ENCODE measurements at regions of chr2 and their contacts with region 1.

Region 1: DNA sequence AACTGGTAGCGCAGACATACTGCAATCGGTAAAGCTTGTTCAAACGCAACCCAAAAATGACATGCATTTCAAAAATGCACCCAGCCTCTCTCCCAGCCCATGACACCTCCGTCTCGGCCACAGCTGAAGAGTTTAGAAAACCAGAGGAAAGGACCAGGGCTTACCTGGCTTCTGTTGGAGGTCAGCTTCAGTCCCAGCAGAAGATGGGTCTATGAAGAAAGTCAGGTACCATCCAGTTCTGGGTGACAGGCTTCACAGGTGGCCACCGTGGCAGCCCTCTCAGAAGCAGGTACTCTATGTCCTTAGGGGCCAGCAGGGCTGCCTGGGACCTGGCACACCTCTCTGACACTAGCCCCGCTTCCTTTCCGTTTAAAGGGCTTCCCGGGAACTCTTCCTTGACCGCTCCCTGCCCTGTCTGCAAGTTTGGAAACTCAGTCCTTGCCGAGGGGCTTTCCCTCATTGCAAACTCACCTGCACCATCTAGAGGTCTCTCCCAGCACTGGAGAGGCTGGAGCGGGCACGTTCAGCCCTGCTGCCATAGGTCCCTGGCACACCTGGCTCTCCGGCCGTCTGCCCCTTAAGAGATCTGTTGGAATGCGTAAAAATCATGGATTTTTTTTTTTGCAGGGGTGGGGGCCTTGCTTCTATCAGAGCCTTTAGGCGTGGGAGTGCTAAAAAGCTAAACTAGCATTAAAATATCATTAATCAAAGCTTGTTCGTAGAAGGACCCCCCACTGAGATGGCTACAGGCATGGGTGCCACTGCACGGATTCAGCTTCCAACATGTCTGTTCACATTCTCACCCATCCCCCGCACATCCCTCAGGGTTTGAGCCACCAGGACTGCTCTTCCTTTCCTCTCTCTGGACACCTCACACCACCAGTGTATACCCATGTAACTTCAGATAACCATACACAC is at the start of gene EDAR:
- DNase-seq: peak; percentile 24 to 72 (median 61)
- ATAC-seq: peak; percentile 85
- H3K4me3 ChIP-seq: peak within 1 kb of the TSS; percentile 80
- H3K4me3 Mint-ChIP-seq: peak within 1 kb of the TSS; percentile 77 to 99 (median 96)
- H3K27ac ChIP-seq: peak within 1 kb of the TSS; percentile 74
- H3K27ac Mint-ChIP-seq: peak within 1 kb of the TSS in 8 of 9 donors; percentile 83 to 98 (median 96)
- H3K4me1 ChIP-seq: peaks cover 2 to 35% of the 10 kb centered on the region in 2 donors
- H3K4me1 Mint-ChIP-seq: peaks cover 21 to 74% (median 69%) of the 10 kb centered on the region in 7 donors
- H3K27me3 ChIP-seq: no peaks in the 10 kb centered on the region
- H3K27me3 Mint-ChIP-seq: peaks cover 0 to 37% (median 0%) of the 10 kb centered on the region in 5 donors
- total RNA-seq, gene EDAR: 0.17 to 26.8 (median 21.6) TPM

Region 2: GRCh38 chr2:108607706-108608301 is 381.3 kb before region 1 on chr2:
- CTCF ChIA-PET with region 1: no interaction called
- POLR2A ChIA-PET with region 1: no interaction called
- intact Hi-C with region 1: loop called in 1 of 2 experiments (anchors 5 kb)
- DNase-seq: peak in 7 of 9 donors; percentile 30 to 61 (median 53)
- ATAC-seq: peak; percentile 45
- H3K4me3 ChIP-seq: no peak overlapping the region
- H3K4me3 Mint-ChIP-seq: no peak overlapping the region
- H3K27ac ChIP-seq: no peak overlapping the region
- H3K27ac Mint-ChIP-seq: no peak overlapping the region
- H3K4me1 ChIP-seq: peaks cover 4 to 14% of the 10 kb centered on the region in 2 donors
- H3K4me1 Mint-ChIP-seq: peaks cover 20 to 68% (median 26%) of the 10 kb centered on the region in 7 donors
- H3K27me3 ChIP-seq: no peaks in the 10 kb centered on the region
- H3K27me3 Mint-ChIP-seq: no peaks in the 10 kb centered on the region

Region 3: DNA sequence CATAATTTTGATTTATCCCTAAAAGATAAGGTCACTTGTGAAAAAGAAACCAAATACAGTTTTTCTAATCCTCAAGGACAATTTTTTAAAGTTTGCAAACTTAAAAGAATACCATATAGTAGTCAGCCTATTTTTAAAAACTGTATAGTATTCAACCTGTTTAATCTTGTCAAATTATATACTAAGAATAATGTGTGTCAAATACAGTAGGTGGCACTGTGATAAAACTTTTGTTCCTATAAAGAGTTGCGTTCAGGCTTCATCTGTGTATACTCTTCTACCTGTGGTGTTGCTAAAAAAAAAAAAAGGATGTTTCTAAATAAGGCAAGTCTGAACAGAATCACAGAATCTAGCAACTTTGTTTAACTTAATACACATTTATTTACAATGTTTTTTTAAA is 133.9 kb before region 1 on chr2:
- CTCF ChIA-PET with region 1: interaction called, 7 read pairs
- POLR2A ChIA-PET with region 1: no interaction called
- intact Hi-C with region 1: loop called (anchors 1 to 2 kb)
- DNase-seq: peak in 6 of 9 donors; percentile 27 to 66 (median 54)
- ATAC-seq: peak; percentile 85
- H3K4me3 ChIP-seq: no peak overlapping the region
- H3K4me3 Mint-ChIP-seq: no peak overlapping the region
- H3K27ac ChIP-seq: no peak overlapping the region
- H3K27ac Mint-ChIP-seq: no peak overlapping the region
- H3K4me1 ChIP-seq: no peaks in the 10 kb centered on the region
- H3K4me1 Mint-ChIP-seq: peaks cover 0 to 8% (median 4%) of the 10 kb centered on the region in 7 donors
- H3K27me3 ChIP-seq: no peaks in the 10 kb centered on the region
- H3K27me3 Mint-ChIP-seq: no peaks in the 10 kb centered on the region

Region 4: GRCh38 chr2:108960006-108960405 is 29.0 kb before region 1 on chr2:
- CTCF ChIA-PET with region 1: interaction called, 8 read pairs
- POLR2A ChIA-PET with region 1: interaction called, 19 read pairs
- intact Hi-C with region 1: loop called in 1 of 2 experiments (anchors 1 kb)
- DNase-seq: no peak
- ATAC-seq: no peak
- H3K4me3 ChIP-seq: no peak overlapping the region
- H3K4me3 Mint-ChIP-seq: peak overlapping the region in 8 of 10 donors; percentile 13 to 89 (median 59)
- H3K27ac ChIP-seq: no peak overlapping the region
- H3K27ac Mint-ChIP-seq: peak overlapping the region in 8 of 9 donors; percentile 78 to 98 (median 94)
- H3K4me1 ChIP-seq: peaks cover 10 to 76% of the 10 kb centered on the region in 2 donors
- H3K4me1 Mint-ChIP-seq: peaks cover 10 to 90% (median 85%) of the 10 kb centered on the region in 7 donors
- H3K27me3 ChIP-seq: no peaks in the 10 kb centered on the region
- H3K27me3 Mint-ChIP-seq: no peaks in the 10 kb centered on the region

Region 5: GRCh38 chr2:109020217-109020637 is 31.2 kb after region 1 on chr2:
- CTCF ChIA-PET with region 1: interaction called, 13 read pairs
- POLR2A ChIA-PET with region 1: no interaction called
- intact Hi-C with region 1: no loop called
- DNase-seq: peak in 6 of 9 donors; percentile 28 to 66 (median 46)
- ATAC-seq: peak; percentile 71
- H3K4me3 ChIP-seq: no peak overlapping the region
- H3K4me3 Mint-ChIP-seq: peak overlapping the region in 8 of 10 donors; percentile 7 to 63 (median 23)
- H3K27ac ChIP-seq: no peak overlapping the region
- H3K27ac Mint-ChIP-seq: peak overlapping the region in 8 of 9 donors; percentile 7 to 86 (median 44)
- H3K4me1 ChIP-seq: peaks cover 0 to 14% of the 10 kb centered on the region in 2 donors
- H3K4me1 Mint-ChIP-seq: peaks cover 12 to 54% (median 40%) of the 10 kb centered on the region in 7 donors
- H3K27me3 ChIP-seq: no peaks in the 10 kb centered on the region
- H3K27me3 Mint-ChIP-seq: peaks cover 0 to 9% (median 0%) of the 10 kb centered on the region in 5 donors

Region 6: DNA sequence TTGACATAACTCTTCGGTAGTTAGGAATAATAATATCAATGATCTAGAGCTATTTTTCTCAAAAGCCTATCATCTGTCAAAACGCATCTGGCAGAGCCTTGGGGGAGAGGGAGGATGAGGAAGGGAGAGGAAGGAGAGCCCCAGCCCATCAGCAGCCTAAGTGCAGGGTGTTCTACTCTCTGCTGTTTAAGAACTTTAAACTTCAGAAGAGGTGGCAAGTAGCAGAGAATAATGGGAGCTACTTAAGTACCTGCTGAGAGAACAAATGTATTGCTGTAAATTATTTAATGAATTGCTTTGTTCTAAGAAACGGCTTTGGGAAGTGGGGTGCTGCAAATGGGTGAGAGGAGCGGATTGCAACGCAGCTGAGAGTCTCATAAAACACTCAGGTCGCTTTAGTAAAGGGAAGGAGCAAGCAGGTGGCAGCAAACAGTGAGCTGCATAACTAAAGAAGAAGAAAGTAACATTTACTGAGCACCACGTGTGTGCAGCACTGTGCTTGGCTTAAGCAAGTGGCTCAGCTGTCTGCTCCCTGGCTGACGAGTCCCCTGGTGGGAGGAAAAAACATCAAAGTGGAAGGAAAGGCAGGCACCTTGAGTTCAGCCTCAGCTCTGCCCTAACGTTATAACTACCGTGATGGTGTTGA is 113.7 kb after region 1 on chr2:
- CTCF ChIA-PET with region 1: interaction called, 3 read pairs
- POLR2A ChIA-PET with region 1: no interaction called
- intact Hi-C with region 1: loop called in 1 of 2 experiments (anchors 2 kb)
- DNase-seq: peak in 7 of 9 donors; percentile 17 to 45 (median 33)
- ATAC-seq: peak; percentile 57
- H3K4me3 ChIP-seq: no peak overlapping the region
- H3K4me3 Mint-ChIP-seq: peak overlapping the region in 8 of 10 donors; percentile 33 to 74 (median 64)
- H3K27ac ChIP-seq: no peak overlapping the region
- H3K27ac Mint-ChIP-seq: peak overlapping the region in 8 of 9 donors; percentile 21 to 87 (median 66)
- H3K4me1 ChIP-seq: peaks cover 0 to 13% of the 10 kb centered on the region in 2 donors
- H3K4me1 Mint-ChIP-seq: peaks cover 4 to 41% (median 36%) of the 10 kb centered on the region in 7 donors
- H3K27me3 ChIP-seq: no peaks in the 10 kb centered on the region
- H3K27me3 Mint-ChIP-seq: peaks cover 0 to 18% (median 0%) of the 10 kb centered on the region in 5 donors

Region 7: DNA sequence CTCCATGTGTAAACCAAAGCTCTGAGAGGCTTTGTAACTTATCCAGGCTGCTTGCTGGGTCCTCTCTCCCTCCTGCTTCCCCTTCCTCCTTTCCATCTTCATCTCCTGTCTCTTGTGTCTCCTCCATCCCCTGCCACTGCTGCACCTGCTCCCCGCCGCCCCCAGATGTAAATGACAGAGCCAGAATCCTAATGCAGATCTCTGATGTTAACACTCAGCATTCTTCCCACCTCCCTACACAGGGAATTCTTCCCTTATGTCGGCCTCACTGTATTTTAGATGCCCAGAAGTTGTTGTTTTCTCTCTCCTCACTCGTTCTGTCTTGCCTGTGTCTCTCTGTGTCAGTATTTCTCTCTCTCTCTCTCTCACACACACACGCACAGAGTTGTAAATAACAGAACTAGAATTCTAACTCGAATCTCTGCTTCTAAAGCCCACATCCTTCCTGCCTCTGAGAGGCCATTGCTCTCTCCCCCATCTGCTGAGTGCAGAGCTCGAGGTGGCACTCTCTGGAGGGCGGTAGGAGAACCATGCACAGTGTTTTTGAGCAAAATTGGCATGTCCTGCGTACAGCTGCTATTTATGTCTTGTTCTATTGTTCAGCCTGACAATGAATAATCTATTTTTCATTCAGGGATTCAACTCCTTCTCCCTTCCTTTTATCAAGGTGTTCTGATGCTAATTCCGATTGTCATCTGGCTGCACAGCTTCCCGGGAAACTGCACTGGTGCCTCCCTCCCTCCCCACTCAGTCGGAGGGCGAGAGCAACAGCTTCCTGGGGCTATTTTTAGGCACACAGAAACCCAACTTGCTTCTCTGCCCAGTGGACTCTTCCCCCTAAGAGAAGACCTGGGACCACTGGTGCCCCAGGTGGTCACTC is 359.9 kb after region 1 on chr2:
- CTCF ChIA-PET with region 1: no interaction called
- POLR2A ChIA-PET with region 1: no interaction called
- intact Hi-C with region 1: loop called in 1 of 2 experiments (anchors 1 kb)
- DNase-seq: peak in 7 of 9 donors; percentile 68 to 86 (median 80)
- ATAC-seq: peak; percentile 96
- H3K4me3 ChIP-seq: peak overlapping the region; percentile 43
- H3K4me3 Mint-ChIP-seq: peak overlapping the region; percentile 69 to 85 (median 78)
- H3K27ac ChIP-seq: peak overlapping the region; percentile 68
- H3K27ac Mint-ChIP-seq: peak overlapping the region; percentile 68 to 96 (median 93)
- H3K4me1 ChIP-seq: peaks cover 24 to 53% of the 10 kb centered on the region in 2 donors
- H3K4me1 Mint-ChIP-seq: peaks cover 23 to 75% (median 68%) of the 10 kb centered on the region in 7 donors
- H3K27me3 ChIP-seq: no peaks in the 10 kb centered on the region
- H3K27me3 Mint-ChIP-seq: peaks cover 0 to 16% (median 0%) of the 10 kb centered on the region in 5 donors

Region 8: GRCh38 chr2:109516445-109517117 is 527.5 kb after region 1 on chr2:
- CTCF ChIA-PET with region 1: no interaction called
- POLR2A ChIA-PET with region 1: no interaction called
- intact Hi-C with region 1: no loop called
- DNase-seq: no peak
- ATAC-seq: no peak
- H3K4me3 ChIP-seq: no peak overlapping the region
- H3K4me3 Mint-ChIP-seq: no peak overlapping the region
- H3K27ac ChIP-seq: no peak overlapping the region
- H3K27ac Mint-ChIP-seq: no peak overlapping the region
- H3K4me1 ChIP-seq: no peaks in the 10 kb centered on the region
- H3K4me1 Mint-ChIP-seq: peaks cover 0 to 7% (median 0%) of the 10 kb centered on the region in 7 donors
- H3K27me3 ChIP-seq: no peaks in the 10 kb centered on the region
- H3K27me3 Mint-ChIP-seq: no peaks in the 10 kb centered on the region